Activated naive CD4-positive, alpha-beta T cell treated with anti-CD3 and anti-CD28 coated beads for 36 hours (primary cell): ENCODE measurements at regions of chr4 and their contacts with region 1.

Region 1: DNA sequence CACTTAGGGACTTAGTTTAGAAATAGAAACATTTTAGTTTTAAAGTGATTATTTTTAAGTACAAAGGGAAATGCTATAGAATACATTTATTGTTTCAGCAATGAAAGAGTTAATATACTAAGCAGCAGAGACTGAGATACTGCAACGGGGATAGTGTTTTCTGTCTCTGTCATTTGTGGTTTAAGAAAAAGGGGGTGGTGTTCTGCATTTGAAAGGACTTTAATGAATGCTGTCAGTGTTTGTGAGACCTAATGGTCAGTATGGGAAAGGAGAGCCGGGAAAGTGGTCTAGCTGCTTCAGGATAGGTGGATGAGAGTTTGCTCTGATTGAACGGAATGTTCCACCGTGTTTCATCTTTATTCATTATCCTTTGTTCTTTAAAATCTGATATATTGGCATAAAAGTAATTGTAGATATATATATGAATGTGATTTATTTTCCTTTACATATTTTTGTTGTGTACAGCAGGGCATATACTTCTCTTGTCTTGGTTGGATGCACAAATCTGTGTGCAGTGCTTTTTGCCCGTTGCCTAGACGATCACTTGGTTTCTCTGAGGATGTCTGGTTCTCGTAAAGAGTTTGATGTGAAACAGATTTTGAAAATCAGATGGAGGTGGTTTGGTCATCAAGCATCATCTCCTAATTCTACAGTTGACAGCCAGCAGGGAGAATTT is at the start of gene KLHL5:
- DNase-seq: no peak
- H3K4me3 Mint-ChIP-seq: no peak within 1 kb of the TSS
- H3K27ac Mint-ChIP-seq: no peak within 1 kb of the TSS
- H3K4me1 Mint-ChIP-seq: peaks cover 29% of the 10 kb centered on the region
- H3K27me3 Mint-ChIP-seq: no peaks in the 10 kb centered on the region
- total RNA-seq, gene KLHL5: 14.1 to 14.9 TPM

Region 2: DNA sequence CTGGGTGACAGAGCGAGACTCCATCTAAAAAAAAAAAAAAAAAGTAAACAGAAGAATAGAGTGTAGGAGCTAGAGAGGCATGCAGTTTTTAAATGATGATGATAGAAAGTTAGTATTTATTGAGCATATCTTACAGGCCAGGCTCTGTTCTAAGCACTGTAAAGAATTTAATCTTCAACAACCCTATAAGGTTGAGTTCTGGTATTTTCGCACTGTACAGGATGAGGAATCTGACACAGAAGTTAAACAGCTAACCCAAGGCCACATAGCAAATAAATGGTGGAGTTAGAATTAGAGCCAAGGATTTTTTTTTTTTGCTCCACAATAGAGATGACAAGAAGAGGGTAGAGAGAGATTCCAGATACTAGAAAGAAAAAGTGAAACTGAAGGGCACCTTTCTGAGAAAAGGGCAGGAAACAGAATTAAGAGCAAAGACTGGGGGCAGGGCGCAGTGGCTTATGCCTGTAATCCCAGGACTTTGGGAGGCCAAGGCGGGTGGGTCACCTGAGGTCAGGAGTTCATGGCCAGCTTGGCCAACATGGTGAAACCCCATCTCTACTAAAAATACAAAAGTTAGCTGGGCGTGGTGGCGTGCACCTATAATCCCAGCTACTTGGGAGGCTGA is 55.9 kb after region 1 on chr4:
- CTCF ChIA-PET with region 1: no interaction called
- intact Hi-C with region 1: loop called (anchors 5 kb)
- DNase-seq: peak; percentile 52
- H3K4me3 Mint-ChIP-seq: no peak overlapping the region
- H3K27ac Mint-ChIP-seq: peak overlapping the region; percentile 79
- H3K4me1 Mint-ChIP-seq: peaks cover 22% of the 10 kb centered on the region
- H3K27me3 Mint-ChIP-seq: no peaks in the 10 kb centered on the region

Region 3: GRCh38 chr4:39415678-39416283 is 353.5 kb after region 1 on chr4:
- CTCF ChIA-PET with region 1: no interaction called
- intact Hi-C with region 1: no loop called
- DNase-seq: no peak
- H3K4me3 Mint-ChIP-seq: no peak overlapping the region
- H3K27ac Mint-ChIP-seq: no peak overlapping the region
- H3K4me1 Mint-ChIP-seq: no peaks in the 10 kb centered on the region
- H3K27me3 Mint-ChIP-seq: no peaks in the 10 kb centered on the region